ENCODE measurements at regions of chr6 and their contacts with region 1.

Region 1: GRCh38 chr6:159633196-159633595 is 59.8 kb downstream of the SOD2 start:
- DNase-seq: no peak
- ATAC-seq: peak; percentile 90
- H3K4me3 ChIP-seq: no peak overlapping the region
- H3K27ac ChIP-seq: no peak overlapping the region
- H3K4me1 ChIP-seq: no peaks in the 10 kb centered on the region
- H3K27me3 ChIP-seq: no peaks in the 10 kb centered on the region
- CTCF ChIP-seq: peak; percentile 43 to 56 (median 53)
- EP300 ChIP-seq: no peak
- POLR2A ChIP-seq: no peak
- RAD21 ChIP-seq: no peak

Region 2: GRCh38 chr6:158703111-158703831 is 929.9 kb before region 1 on chr6:
- CTCF ChIA-PET with region 1: no interaction called
- POLR2A ChIA-PET with region 1: no interaction called
- RAD21 ChIA-PET with region 1: no interaction called
- SMC1A ChIA-PET with region 1: no interaction called
- in situ Hi-C with region 1: no loop called
- intact Hi-C with region 1: no loop called
- DNase-seq: no peak
- ATAC-seq: no peak
- H3K4me3 ChIP-seq: no peak overlapping the region
- H3K27ac ChIP-seq: no peak overlapping the region
- H3K4me1 ChIP-seq: peaks cover 9% of the 10 kb centered on the region
- H3K27me3 ChIP-seq: no peaks in the 10 kb centered on the region
- CTCF ChIP-seq: no peak
- EP300 ChIP-seq: no peak
- POLR2A ChIP-seq: no peak
- RAD21 ChIP-seq: no peak

Region 3: DNA sequence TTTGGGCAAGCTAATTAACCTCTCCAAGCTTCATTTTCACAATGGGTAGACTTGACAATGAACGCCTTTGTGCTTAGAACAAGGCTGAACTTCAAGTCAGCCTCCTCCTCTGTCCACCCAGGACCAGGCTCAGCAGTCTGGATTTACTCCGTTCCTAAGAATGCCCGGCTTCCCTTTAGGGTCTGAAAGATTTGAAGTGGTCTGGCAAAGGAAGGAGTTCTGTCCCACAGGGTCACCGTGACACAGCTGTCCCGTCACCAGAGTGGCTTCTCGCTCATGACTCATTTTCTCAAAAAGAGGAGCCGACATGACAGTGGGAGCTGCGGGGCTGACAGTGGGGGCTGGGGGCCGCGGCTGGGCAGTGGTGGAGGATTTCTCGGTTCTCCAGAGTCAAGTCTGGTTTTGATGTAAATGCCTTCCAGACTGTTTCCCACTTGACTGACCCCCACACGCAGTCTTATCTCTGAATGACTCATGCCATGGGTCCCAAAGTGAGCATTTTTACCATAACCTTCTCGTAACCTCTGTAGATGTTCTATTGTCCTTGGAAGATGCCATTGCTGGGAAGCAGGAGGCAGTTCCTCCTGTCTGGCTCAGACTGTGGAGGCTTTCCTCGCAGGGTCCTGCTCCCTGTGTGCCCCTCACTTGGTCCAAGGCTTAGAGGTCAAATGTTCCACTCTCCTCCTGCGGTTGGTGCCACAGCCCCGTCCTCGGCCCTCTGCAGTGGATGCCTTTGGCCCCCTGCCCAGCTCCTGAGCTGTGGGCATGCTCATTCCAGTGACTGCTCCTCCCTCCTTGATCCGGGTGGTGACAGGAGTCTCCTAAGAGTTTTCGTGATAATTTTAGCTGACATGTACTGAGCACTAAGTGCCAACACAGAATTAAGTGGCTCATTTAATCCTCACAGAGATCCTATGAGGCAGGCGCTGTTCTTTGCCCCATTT is 210.9 kb before region 1 on chr6:
- CTCF ChIA-PET with region 1: no interaction called
- POLR2A ChIA-PET with region 1: no interaction called
- RAD21 ChIA-PET with region 1: no interaction called
- SMC1A ChIA-PET with region 1: no interaction called
- in situ Hi-C with region 1: no loop called
- intact Hi-C with region 1: no loop called
- DNase-seq: no peak
- ATAC-seq: no peak
- H3K4me3 ChIP-seq: no peak overlapping the region
- H3K27ac ChIP-seq: no peak overlapping the region
- H3K4me1 ChIP-seq: no peaks in the 10 kb centered on the region
- H3K27me3 ChIP-seq: no peaks in the 10 kb centered on the region; a peak in 1 of 4 replicates
- CTCF ChIP-seq: no peak
- EP300 ChIP-seq: no peak
- POLR2A ChIP-seq: no peak
- RAD21 ChIP-seq: no peak

Region 4: DNA sequence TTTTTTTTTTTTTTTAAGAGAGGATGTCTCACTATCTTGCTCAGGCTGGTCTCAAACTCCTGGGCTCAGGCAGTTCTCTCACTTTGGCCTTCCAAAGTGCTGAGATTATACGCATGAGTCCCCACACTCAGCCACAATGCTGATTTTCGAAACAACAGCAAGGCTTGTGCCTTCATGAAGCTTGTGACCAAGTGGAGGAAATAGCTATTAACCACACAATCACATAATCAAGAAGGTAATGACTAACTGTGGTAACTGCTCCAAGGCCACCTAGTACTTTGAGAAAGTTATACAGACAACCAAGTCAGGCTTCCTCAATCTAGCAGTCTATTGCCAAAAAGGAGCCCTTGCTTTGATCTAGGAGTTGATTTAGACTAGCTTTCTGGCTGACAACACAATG is 13.5 kb after region 1 on chr6:
- CTCF ChIA-PET with region 1: interaction called, 26 read pairs
- POLR2A ChIA-PET with region 1: interaction called, 5 read pairs
- RAD21 ChIA-PET with region 1: interaction called, 8 read pairs
- SMC1A ChIA-PET with region 1: interaction called, 3 read pairs
- in situ Hi-C with region 1: no loop called
- intact Hi-C with region 1: no loop called
- DNase-seq: peak; percentile 63
- ATAC-seq: peak; percentile 98
- H3K4me3 ChIP-seq: no peak overlapping the region
- H3K27ac ChIP-seq: no peak overlapping the region
- H3K4me1 ChIP-seq: peaks cover 4% of the 10 kb centered on the region; the same call in 1 of the 2 replicates
- H3K27me3 ChIP-seq: no peaks in the 10 kb centered on the region
- CTCF ChIP-seq: no peak
- EP300 ChIP-seq: no peak; a peak in 1 of 4 replicates
- POLR2A ChIP-seq: no peak
- RAD21 ChIP-seq: no peak

Region 5: GRCh38 chr6:159654483-159655098 is 21.4 kb after region 1 on chr6:
- CTCF ChIA-PET with region 1: interaction called, 121 read pairs
- POLR2A ChIA-PET with region 1: interaction called, 4 read pairs
- RAD21 ChIA-PET with region 1: interaction called, 24 read pairs
- SMC1A ChIA-PET with region 1: interaction called, 28 read pairs
- in situ Hi-C with region 1: no loop called
- intact Hi-C with region 1: loop called (anchors 1 kb)
- DNase-seq: peak; percentile 12
- ATAC-seq: peak; percentile 74
- H3K4me3 ChIP-seq: no peak overlapping the region
- H3K27ac ChIP-seq: no peak overlapping the region
- H3K4me1 ChIP-seq: no peaks in the 10 kb centered on the region
- H3K27me3 ChIP-seq: no peaks in the 10 kb centered on the region
- CTCF ChIP-seq: peak; percentile 42 to 62 (median 49); a peak in 5 of 6 replicates
- EP300 ChIP-seq: no peak
- POLR2A ChIP-seq: no peak
- RAD21 ChIP-seq: peak; percentile 71

Region 6: DNA sequence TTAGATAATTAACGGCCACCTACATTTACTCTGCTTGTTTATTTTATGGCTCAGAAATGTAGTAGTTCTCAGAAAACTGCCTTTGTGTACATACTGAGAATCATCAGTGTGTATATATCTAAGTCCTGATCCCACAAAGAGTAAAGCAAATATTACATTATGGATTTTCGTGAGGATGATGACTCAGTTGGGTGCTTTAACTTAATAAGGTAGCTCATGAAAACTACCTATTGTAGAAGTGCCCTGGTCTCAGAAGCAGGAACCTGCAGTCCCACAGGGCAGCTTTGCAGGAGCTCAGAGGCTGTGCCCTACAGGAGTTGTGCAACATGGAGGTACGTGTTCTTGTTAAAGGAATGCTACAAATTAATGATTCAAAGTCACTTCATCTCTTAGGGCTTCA is 1177.0 kb after region 1 on chr6:
- CTCF ChIA-PET with region 1: no interaction called
- POLR2A ChIA-PET with region 1: no interaction called
- RAD21 ChIA-PET with region 1: no interaction called
- SMC1A ChIA-PET with region 1: no interaction called
- in situ Hi-C with region 1: no loop called
- intact Hi-C with region 1: no loop called
- DNase-seq: no peak
- ATAC-seq: no peak
- H3K4me3 ChIP-seq: no peak overlapping the region
- H3K27ac ChIP-seq: no peak overlapping the region
- H3K4me1 ChIP-seq: no peaks in the 10 kb centered on the region
- H3K27me3 ChIP-seq: no peaks in the 10 kb centered on the region
- CTCF ChIP-seq: no peak
- EP300 ChIP-seq: no peak
- POLR2A ChIP-seq: no peak
- RAD21 ChIP-seq: no peak